ENCODE measurements at regions of chr9 and their contacts with region 1.

Region 1: GRCh38 chr9:73869264-73869663 is 627.9 kb upstream of the RORB start:
- DNase-seq: peak; percentile 83
- H3K4me3 Mint-ChIP-seq: no peak overlapping the region
- H3K27ac Mint-ChIP-seq: no peak overlapping the region
- H3K4me1 Mint-ChIP-seq: peaks cover 11% of the 10 kb centered on the region
- H3K27me3 Mint-ChIP-seq: peaks cover 62% of the 10 kb centered on the region
- CTCF ChIP-seq: no peak

Region 2: GRCh38 chr9:73780916-73781315 is 88.3 kb before region 1 on chr9:
- CTCF ChIA-PET with region 1: no interaction called
- POLR2A ChIA-PET with region 1: interaction called, 3 read pairs
- intact Hi-C with region 1: loop called (anchors 5 kb)
- DNase-seq: peak; percentile 93
- H3K4me3 Mint-ChIP-seq: no peak overlapping the region
- H3K27ac Mint-ChIP-seq: no peak overlapping the region
- H3K4me1 Mint-ChIP-seq: peaks cover 20% of the 10 kb centered on the region
- H3K27me3 Mint-ChIP-seq: peaks cover 8% of the 10 kb centered on the region
- CTCF ChIP-seq: no peak

Region 3: GRCh38 chr9:73847536-73847935 is 21.7 kb before region 1 on chr9:
- CTCF ChIA-PET with region 1: no interaction called
- POLR2A ChIA-PET with region 1: no interaction called
- intact Hi-C with region 1: no loop called
- DNase-seq: no peak
- H3K4me3 Mint-ChIP-seq: no peak overlapping the region
- H3K27ac Mint-ChIP-seq: no peak overlapping the region
- H3K4me1 Mint-ChIP-seq: no peaks in the 10 kb centered on the region
- H3K27me3 Mint-ChIP-seq: peaks cover 53% of the 10 kb centered on the region
- CTCF ChIP-seq: no peak

Measured in MCF 10A (cell line).